Activated T-helper 1 cell treated with anti-CD3 and anti-CD28 coated beads, Interleukin-12 subunit alpha, Interleukin-12 subunit beta, Interleukin-2, Interleukin-4 antibody, amounts not matched to agents 30 ng/mL and 10 ng/mL and 1 ng/mL, durations not matched to agents 14 hours and 24 hours and 36 hours (primary cell): ENCODE measurements at regions of chr7 and their contacts with region 1.

Region 1: GRCh38 chr7:17015598-17016031 is 133.8 kb upstream of the AGR3 start:
- DNase-seq: no peak
- H3K4me3 Mint-ChIP-seq: no peak overlapping the region
- H3K27ac Mint-ChIP-seq: no peak overlapping the region
- H3K4me1 Mint-ChIP-seq: peaks cover 5% of the 10 kb centered on the region
- H3K27me3 Mint-ChIP-seq: peaks cover 7% of the 10 kb centered on the region

Region 2: DNA sequence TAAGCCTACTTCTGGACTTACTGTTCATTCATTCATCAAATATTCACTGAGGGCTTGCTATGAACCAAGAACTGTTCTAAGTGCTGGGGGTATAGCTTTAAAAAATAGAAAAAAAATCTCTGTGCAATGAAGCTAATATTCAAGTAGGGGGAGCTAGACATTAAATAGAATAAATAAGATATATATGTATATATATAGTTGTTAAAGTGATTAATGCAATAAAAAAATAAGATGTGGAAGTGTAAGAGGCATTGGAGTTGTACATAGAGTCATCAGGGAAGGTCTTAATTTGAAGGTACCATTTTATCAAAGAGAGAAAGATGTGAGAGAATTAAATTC is 47.4 kb after region 1 on chr7:
- intact Hi-C with region 1: loop called (anchors 10 kb)
- DNase-seq: no peak
- H3K4me3 Mint-ChIP-seq: no peak overlapping the region
- H3K27ac Mint-ChIP-seq: no peak overlapping the region
- H3K4me1 Mint-ChIP-seq: peaks cover 17% of the 10 kb centered on the region
- H3K27me3 Mint-ChIP-seq: no peaks in the 10 kb centered on the region

Region 3: DNA sequence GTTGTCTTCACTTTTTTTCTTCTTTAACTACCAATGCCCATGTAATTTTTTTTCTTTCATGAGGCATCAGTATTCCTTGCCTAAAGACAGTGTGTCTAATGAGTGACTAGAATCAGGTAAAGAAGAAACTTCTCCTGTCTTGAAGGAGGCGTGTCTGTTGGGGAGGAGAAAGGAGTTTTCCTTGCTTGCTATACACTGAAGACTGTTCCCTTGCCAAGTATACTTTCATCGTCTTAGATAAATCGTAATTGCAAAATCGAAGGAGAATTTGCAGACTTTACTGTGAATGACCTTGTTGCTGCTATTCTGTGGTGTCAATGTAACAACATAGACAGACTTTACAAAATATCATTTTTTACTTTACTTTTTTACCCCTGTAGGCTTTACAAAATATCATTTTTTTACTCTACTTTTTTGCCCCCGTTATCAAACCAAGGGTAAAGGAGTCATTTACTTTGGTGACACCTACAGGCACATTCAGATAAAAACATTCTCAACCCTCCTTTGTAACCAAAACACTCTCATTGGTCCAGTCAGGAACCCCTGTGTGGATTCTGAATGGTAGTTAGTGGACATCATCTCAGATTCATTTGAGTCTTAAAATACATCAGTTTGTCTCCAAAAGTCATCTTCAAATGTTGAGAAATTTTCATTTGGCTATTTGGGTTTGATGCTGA is 515.3 kb after region 1 on chr7:
- intact Hi-C with region 1: no loop called
- DNase-seq: no peak
- H3K4me3 Mint-ChIP-seq: no peak overlapping the region
- H3K27ac Mint-ChIP-seq: no peak overlapping the region
- H3K4me1 Mint-ChIP-seq: peaks cover 10% of the 10 kb centered on the region
- H3K27me3 Mint-ChIP-seq: peaks cover 3% of the 10 kb centered on the region